ENCODE measurements at regions of chr17 and their contacts with region 1.

Region 1: GRCh38 chr17:47066841-47067682 is 88.0 kb upstream of the RPRML start:
- DNase-seq: peak; percentile 65 to 96 (median 73)

Region 2: DNA sequence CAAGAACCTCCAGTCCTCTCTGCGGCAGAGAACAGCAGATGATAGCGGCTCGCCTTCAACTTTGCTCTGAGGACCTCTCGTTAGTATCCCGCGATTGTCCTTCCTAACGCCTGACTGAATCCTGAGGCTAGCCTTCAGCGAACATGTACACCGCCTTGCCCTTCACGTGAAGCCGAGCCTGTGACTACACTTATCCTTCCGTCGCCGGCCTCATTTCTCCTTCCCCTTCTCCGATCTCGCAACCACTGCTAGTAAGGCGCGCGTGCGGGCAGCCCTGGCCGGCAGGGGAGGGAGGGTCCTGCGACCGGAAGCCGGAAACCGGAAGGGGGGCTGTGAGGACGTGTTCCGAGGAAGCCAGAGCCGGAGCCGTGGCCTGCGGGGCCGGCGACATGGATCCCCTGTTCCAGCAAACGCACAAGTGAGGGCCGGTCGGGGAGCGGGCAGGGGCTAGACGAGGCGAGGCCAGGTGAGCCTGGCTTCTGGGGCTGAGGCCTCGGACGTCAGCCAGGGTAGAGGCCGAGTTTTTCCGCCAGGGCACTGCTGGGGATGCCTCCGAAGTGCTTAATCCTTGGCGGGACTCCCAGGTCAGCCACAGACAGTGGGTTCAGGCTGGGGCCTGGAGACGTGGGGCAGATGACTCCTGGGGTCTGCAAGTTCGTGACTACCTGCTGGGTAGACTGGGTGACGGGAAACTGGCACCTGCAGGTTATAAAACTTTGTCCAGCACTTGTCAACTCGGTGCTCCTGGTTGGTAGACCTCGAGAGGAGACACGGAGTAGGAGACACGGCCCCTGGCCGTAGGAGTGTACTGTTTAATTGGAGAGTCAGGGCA is 144.0 kb before region 1 on chr17 and contains the start of gene GOSR2:
- intact Hi-C with region 1: loop called (anchors 5 kb)
- DNase-seq: peak; percentile 84 to 98 (median 91)